Activated naive CD4-positive, alpha-beta T cell treated with anti-CD3 and anti-CD28 coated beads, Interleukin-2, amount 10 ng/mL, durations not matched to agents 7 days and 5 days (primary cell): ENCODE measurements at regions of chr15 and their contacts with region 1.

Region 1: GRCh38 chr15:22224241-22224671 is 143.9 kb downstream of the OR4M2 start:
- DNase-seq: no peak
- H3K4me3 Mint-ChIP-seq: no peak overlapping the region
- H3K27ac Mint-ChIP-seq: no peak overlapping the region
- H3K4me1 Mint-ChIP-seq: peaks cover 24% of the 10 kb centered on the region
- H3K27me3 Mint-ChIP-seq: peaks cover 41% of the 10 kb centered on the region

Region 2: DNA sequence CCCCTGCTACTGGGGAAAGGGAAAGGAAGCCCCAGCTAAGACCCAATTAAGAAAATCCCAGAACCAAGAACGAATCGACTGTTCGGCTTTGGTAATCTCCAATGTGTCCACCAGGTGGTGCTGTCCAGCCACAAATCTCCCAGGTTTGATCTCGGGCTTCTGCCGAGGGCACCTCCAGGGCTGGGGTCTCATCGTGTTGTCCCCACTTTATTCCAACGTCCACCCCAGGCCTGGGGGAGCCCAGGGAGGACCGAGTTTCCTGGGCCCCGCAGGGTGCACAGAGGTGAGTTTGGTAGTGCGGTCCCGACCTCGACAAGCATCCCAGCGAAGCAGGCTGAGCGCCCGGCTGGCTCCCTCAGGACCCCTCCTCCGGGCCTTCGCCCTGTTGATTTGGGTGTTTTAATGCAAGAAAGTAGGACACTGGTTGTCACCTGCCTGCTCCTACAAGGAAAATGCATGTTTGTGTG is 1867.8 kb before region 1 on chr15:
- CTCF ChIA-PET with region 1: interaction called, 97 read pairs
- DNase-seq: peak; percentile 82
- H3K4me3 Mint-ChIP-seq: no peak overlapping the region
- H3K27ac Mint-ChIP-seq: peak overlapping the region; percentile 61
- H3K4me1 Mint-ChIP-seq: peaks cover 9% of the 10 kb centered on the region
- H3K27me3 Mint-ChIP-seq: peaks cover 7% of the 10 kb centered on the region

Region 3: GRCh38 chr15:22251422-22251821 is 27.2 kb after region 1 on chr15:
- CTCF ChIA-PET with region 1: no interaction called
- DNase-seq: no peak
- H3K4me3 Mint-ChIP-seq: no peak overlapping the region
- H3K27ac Mint-ChIP-seq: no peak overlapping the region
- H3K4me1 Mint-ChIP-seq: peaks cover 15% of the 10 kb centered on the region
- H3K27me3 Mint-ChIP-seq: peaks cover 41% of the 10 kb centered on the region